ENCODE measurements at regions of chr6 and their contacts with region 1.

Region 1: DNA sequence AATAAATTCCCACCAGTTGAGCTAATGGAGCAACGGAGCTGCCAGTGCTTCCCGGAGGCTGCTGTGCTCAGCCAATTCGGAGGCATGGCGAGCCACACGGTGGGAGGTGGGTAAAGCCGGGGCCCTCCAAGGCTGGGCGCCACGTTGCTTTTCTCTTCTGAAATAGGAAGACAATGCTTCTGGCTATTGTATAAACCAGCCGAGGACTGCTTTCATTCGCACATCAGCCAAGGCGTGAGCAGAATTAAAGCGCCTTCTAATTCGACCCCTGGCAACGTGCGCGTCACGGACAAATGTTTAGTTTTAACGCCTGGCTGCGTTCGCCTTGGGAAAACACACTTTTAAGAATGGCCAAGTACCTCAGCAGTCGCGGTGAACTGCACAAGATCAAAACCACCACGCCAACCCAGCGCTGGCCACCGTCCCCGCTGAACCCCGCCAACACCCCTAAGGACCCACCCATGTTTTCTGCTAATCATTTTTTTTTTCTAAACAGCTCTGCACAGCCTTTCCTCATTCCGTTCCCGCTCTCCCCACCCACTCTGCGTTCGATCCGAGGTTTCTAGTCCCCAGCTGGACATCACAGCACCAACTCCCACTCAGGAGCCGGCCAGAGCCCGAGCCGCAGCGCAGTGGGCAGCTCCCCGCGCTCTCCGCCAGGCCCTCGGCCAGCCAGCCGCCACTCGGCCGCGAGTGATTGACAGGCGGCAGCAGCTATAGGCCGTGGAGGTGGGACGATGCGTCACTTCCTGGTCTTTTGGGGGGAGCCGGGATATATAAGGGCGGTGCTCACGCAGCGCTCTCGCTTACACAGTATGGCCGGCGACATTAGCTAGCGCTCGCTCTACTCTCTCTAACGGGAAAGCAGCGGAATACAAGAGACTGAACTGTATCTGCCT is at the start of gene AMD1:
- DNase-seq: peak; percentile 96
- ATAC-seq: peak; percentile 92
- H3K4me3 ChIP-seq: peak within 1 kb of the TSS; percentile 85 to 88
- H3K27ac ChIP-seq: peak within 1 kb of the TSS; percentile 86
- H3K4me1 ChIP-seq: peaks cover 24% of the 10 kb centered on the region
- H3K27me3 ChIP-seq: no peaks in the 10 kb centered on the region
- CTCF ChIP-seq: no peak
- total RNA-seq, gene AMD1: 81.7 TPM

Region 2: DNA sequence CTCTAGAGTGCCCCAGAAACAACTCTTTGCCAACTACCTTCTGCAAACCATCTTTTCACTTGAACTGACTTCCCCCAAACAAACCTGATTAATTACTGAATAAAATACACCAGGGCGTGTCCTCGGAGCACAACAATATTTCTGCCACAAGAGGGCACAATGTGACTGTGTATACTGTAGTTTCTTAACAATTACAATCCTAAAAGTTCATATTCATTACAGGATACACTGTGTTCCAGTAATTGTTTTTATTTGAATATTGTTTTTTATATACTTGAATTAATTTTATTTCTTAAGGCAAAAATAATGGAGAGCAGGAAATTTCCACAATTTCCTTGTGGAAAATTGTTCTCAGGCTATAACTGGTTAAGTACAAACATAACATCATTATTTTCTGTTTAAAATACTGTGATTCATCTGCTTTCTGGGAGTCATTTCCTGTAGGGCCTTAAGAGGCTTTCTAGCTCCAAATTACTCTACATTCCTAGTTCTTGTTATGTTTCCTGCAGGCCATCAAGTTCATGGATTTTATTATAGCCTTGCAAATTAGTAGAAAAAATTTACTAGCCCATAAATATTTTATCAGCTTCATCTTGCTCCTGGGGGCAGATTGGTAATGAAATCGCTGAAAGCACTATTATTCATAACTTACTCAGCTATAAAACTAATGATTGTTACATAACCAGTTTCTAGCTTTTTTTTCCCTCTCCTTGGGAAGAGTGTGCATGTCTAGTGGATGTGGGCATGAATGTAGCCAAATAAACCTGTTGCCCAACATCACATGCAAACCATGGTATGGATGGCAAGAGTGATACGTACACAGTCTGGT is 345.9 kb before region 1 on chr6:
- CTCF ChIA-PET with region 1: no interaction called
- POLR2A ChIA-PET with region 1: no interaction called
- in situ Hi-C with region 1: loop called (anchors 5 kb)
- intact Hi-C with region 1: loop called (anchors 2 kb)
- DNase-seq: peak; percentile 86
- ATAC-seq: peak; percentile 85
- H3K4me3 ChIP-seq: no peak overlapping the region
- H3K27ac ChIP-seq: peak overlapping the region; percentile 58; the same call in 1 of the 2 replicates
- H3K4me1 ChIP-seq: peaks cover 17% of the 10 kb centered on the region
- H3K27me3 ChIP-seq: no peaks in the 10 kb centered on the region
- CTCF ChIP-seq: peak; percentile 90

Region 3: GRCh38 chr6:110537208-110538123 is 336.8 kb before region 1 on chr6:
- CTCF ChIA-PET with region 1: no interaction called
- POLR2A ChIA-PET with region 1: interaction called, 4 read pairs
- in situ Hi-C with region 1: loop called (anchors 5 kb)
- intact Hi-C with region 1: no loop called
- DNase-seq: peak; percentile 83
- ATAC-seq: peak; percentile 85
- H3K4me3 ChIP-seq: no peak overlapping the region
- H3K27ac ChIP-seq: peak overlapping the region; percentile 52
- H3K4me1 ChIP-seq: peaks cover 8% of the 10 kb centered on the region
- H3K27me3 ChIP-seq: no peaks in the 10 kb centered on the region
- CTCF ChIP-seq: no peak

Region 4: GRCh38 chr6:110671116-110671846 is 202.9 kb before region 1 on chr6:
- CTCF ChIA-PET with region 1: no interaction called
- POLR2A ChIA-PET with region 1: no interaction called
- in situ Hi-C with region 1: loop called (anchors 10 kb)
- intact Hi-C with region 1: no loop called
- DNase-seq: no peak
- ATAC-seq: no peak
- H3K4me3 ChIP-seq: no peak overlapping the region
- H3K27ac ChIP-seq: no peak overlapping the region
- H3K4me1 ChIP-seq: peaks cover 3% of the 10 kb centered on the region; the same call in 1 of the 2 replicates
- H3K27me3 ChIP-seq: no peaks in the 10 kb centered on the region
- CTCF ChIP-seq: no peak

Region 5: DNA sequence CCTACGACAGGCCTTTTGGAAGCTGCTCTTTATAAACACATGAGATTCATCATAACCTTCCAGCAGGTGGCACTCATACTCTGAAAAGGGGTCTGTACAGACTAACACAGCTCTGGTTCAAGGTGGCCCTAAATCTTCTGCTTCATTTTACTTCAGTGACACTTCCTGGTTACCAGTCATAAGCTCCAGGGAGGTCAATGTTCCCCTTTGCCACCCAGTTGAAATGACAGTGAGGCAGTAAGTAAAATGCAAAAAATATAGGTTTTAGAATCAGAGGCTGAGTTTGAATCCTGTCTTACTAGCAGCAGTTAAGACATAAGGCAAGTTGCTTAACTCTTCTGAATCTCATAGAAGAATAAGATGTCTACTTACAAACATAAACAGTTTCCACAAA is 191.8 kb before region 1 on chr6:
- CTCF ChIA-PET with region 1: interaction called, 24 read pairs
- POLR2A ChIA-PET with region 1: interaction called, 6 read pairs
- in situ Hi-C with region 1: loop called (anchors 10 kb)
- intact Hi-C with region 1: loop called (anchors 2 kb)
- DNase-seq: peak; percentile 92
- ATAC-seq: peak; percentile 99
- H3K4me3 ChIP-seq: no peak overlapping the region
- H3K27ac ChIP-seq: no peak overlapping the region; the same call in 1 of the 2 replicates
- H3K4me1 ChIP-seq: peaks cover 13% of the 10 kb centered on the region
- H3K27me3 ChIP-seq: no peaks in the 10 kb centered on the region
- CTCF ChIP-seq: peak; percentile 89

Region 6: DNA sequence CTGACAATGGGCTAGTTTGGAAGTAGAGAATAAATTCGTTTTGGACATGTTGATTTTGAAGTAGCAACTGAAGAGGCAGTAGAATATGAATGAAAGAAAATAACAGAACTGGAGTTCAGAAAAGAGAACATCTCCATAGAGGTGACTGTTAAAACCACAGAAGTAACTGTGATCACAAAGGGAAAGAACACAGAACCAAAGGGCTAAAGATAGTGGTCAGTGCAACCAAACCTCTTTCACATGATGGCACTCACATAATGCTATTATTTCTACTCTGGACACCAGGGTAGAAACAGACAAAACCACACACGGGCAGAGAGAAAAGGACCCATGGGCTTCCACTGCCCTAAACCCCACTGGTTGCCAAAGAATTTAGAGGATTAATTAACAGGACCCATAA is 117.4 kb before region 1 on chr6:
- CTCF ChIA-PET with region 1: no interaction called
- POLR2A ChIA-PET with region 1: interaction called, 10 read pairs
- in situ Hi-C with region 1: no loop called
- intact Hi-C with region 1: no loop called
- DNase-seq: no peak
- ATAC-seq: no peak
- H3K4me3 ChIP-seq: no peak overlapping the region
- H3K27ac ChIP-seq: no peak overlapping the region
- H3K4me1 ChIP-seq: no peaks in the 10 kb centered on the region
- H3K27me3 ChIP-seq: no peaks in the 10 kb centered on the region
- CTCF ChIP-seq: no peak

Region 7: DNA sequence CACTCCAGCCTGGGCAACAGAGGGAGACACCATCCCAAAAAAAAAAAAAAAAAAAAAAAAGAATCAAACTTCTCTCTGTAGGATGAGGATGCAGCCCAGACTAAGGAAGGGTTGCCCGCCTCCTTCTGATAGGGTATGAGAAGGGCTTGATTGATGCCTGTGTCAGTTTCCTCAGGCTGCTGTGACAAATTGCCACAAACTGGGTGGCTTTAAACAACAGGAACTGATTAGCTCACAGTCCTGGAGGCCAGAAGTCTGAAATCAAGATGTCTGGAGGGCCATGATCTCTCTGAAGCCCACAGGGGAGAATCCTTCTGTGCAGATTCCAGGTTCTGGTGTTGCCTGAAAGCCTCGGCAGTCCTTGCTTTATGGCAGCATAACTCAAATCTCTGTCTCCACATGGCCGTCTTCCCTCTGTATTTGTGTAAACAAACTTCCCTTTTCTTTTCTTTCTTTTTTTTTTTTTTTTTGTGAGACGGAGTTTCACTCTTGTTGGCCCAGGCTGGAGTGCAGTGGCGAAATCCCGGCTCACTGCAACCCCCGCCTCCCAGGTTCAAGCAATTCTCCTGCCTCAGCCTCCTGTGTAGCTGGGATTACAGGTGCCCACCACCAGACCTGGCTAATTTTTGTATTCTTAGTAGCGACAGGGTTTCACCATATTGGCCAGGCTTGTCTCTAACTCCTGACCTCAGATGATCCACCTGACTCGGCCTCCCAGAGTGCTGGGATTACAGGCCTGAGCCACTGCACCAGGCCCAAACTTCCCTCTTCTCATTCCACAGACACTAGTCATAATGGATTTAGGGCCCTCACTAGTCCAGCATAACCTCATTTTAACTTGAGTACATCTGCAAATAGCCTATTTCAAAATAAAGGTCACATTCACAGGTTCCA is 47.7 kb before region 1 on chr6:
- CTCF ChIA-PET with region 1: no interaction called
- POLR2A ChIA-PET with region 1: interaction called, 15 read pairs
- in situ Hi-C with region 1: no loop called
- intact Hi-C with region 1: no loop called
- DNase-seq: no peak
- ATAC-seq: no peak
- H3K4me3 ChIP-seq: no peak overlapping the region
- H3K27ac ChIP-seq: no peak overlapping the region
- H3K4me1 ChIP-seq: no peaks in the 10 kb centered on the region
- H3K27me3 ChIP-seq: no peaks in the 10 kb centered on the region; the same call in 1 of the 2 replicates
- CTCF ChIP-seq: no peak